T-cell (primary cell): ENCODE measurements at regions of chr10 and their contacts with region 1.

Region 1: DNA sequence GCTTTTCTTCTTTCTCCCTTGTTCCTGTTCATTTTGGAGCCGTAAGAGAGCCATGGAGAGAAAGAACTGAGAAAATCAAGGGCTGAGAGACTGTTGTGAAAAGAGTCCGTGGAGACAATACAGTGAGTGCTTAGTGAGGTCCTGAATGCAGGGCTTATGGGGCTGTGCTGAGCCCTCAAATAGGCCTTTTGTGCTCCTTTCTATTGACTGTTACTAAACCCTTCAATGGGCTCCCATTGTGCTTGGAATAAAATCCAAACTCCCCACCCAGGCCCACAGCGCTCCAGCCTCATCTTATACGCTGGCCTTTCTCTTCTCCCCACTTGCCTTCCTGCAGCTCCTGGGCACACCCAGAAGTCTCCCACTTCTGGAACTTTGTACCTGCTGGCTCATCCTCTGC is 243.1 kb upstream of the HABP2 start:
- DNase-seq: no peak
- ATAC-seq: no peak
- H3K4me3 ChIP-seq: no peak overlapping the region
- H3K4me3 Mint-ChIP-seq: no peak overlapping the region
- H3K27ac ChIP-seq: no peak overlapping the region
- H3K27ac Mint-ChIP-seq: no peak overlapping the region
- H3K4me1 ChIP-seq: no peaks in the 10 kb centered on the region
- H3K4me1 Mint-ChIP-seq: peaks cover 0 to 2% (median 0%) of the 10 kb centered on the region in 3 donors
- H3K27me3 ChIP-seq: peaks cover 0 to 10% of the 10 kb centered on the region in 2 experiments
- H3K27me3 Mint-ChIP-seq: peaks cover 0 to 4% of the 10 kb centered on the region in 2 donors

Region 2: DNA sequence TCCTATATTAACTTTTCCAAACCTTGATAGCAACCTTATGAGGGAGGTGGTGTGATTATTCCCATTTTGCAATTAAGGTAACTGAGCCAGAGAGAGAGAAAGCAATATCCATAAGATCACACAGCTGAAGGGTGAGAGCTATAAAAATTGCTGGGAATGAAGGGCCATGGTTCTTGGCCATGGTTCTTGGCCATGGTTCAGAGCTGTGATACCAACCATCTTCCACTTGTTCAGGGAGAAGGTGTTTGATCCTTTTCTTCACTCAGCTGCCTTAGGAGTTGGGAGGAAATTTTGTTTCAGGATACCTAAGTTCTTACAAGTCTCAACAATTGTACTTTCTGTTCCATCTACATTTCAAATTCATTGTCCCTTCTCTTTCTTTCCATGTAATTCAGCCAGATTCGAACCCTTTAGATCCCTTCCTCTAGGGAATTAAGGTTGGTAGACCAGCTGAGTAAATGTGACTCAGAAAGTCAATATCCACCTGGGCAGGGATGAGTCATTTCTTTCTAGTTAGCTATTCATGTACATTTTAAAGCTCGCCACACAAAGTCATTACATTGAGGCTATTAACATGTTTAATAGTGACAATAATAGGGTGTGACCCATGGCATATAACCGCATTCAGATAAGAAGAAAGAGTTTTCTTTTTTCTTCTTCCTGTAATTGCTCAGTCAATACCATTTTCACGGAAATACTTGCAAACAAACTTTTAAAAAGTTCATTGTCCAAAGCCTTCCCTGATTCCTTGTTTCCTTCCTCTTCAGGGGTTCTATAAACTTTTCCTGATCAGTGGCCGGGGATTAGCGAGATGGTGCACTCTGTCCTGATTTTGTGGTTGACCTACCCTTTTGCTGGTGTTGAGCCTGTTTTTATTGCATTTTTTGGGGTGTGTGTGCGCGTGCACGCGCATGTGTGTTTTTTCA is 216.3 kb before region 1 on chr10:
- CTCF ChIA-PET with region 1: no interaction called
- POLR2A ChIA-PET with region 1: interaction called in 1 of 2 experiments, 12 read pairs
- DNase-seq: peak in 1 of 35 experiments; percentile 23
- ATAC-seq: peak in 1 of 4 experiments; percentile 26
- H3K4me3 ChIP-seq: no peak overlapping the region
- H3K4me3 Mint-ChIP-seq: peak overlapping the region in 1 of 3 donors; percentile 31
- H3K27ac ChIP-seq: no peak overlapping the region
- H3K27ac Mint-ChIP-seq: peak overlapping the region in 1 of 2 donors; percentile 51
- H3K4me1 ChIP-seq: peaks cover 3 to 21% of the 10 kb centered on the region in 2 experiments
- H3K4me1 Mint-ChIP-seq: peaks cover 16 to 28% (median 18%) of the 10 kb centered on the region in 3 donors
- H3K27me3 ChIP-seq: no peaks in the 10 kb centered on the region
- H3K27me3 Mint-ChIP-seq: no peaks in the 10 kb centered on the region

Region 3: GRCh38 chr10:113221756-113222168 is 88.0 kb before region 1 on chr10:
- CTCF ChIA-PET with region 1: no interaction called
- POLR2A ChIA-PET with region 1: no interaction called
- DNase-seq: peak in 1 of 35 experiments; percentile 20
- ATAC-seq: peak in 1 of 4 experiments; percentile 62
- H3K4me3 ChIP-seq: peak overlapping the region in 1 of 2 donors; percentile 29
- H3K4me3 Mint-ChIP-seq: peak overlapping the region in 2 of 3 donors; percentile 18 to 63
- H3K27ac ChIP-seq: no peak overlapping the region
- H3K27ac Mint-ChIP-seq: no peak overlapping the region
- H3K4me1 ChIP-seq: peaks cover 2 to 7% of the 10 kb centered on the region in 2 experiments
- H3K4me1 Mint-ChIP-seq: peaks cover 16 to 28% (median 18%) of the 10 kb centered on the region in 3 donors
- H3K27me3 ChIP-seq: peaks cover 0 to 4% of the 10 kb centered on the region in 2 experiments
- H3K27me3 Mint-ChIP-seq: peaks cover 34 to 39% of the 10 kb centered on the region in 2 donors